Colonic mucosa (tissue), 4 donors: ENCODE measurements at regions of chr16 and their contacts with region 1.

Region 1: GRCh38 chr16:18983565-18984424 is at the start of gene TMC7:
- DNase-seq: peak; percentile 92
- H3K4me3 ChIP-seq: peak within 1 kb of the TSS; percentile 76
- H3K27ac ChIP-seq: peak within 1 kb of the TSS; percentile 72
- H3K4me1 ChIP-seq: no peaks in the 10 kb centered on the region
- H3K27me3 ChIP-seq: peaks cover 3% of the 10 kb centered on the region
- CTCF ChIP-seq: peak; percentile 55
- total RNA-seq, gene TMC7: 10.0 to 10.6 TPM

Region 2: DNA sequence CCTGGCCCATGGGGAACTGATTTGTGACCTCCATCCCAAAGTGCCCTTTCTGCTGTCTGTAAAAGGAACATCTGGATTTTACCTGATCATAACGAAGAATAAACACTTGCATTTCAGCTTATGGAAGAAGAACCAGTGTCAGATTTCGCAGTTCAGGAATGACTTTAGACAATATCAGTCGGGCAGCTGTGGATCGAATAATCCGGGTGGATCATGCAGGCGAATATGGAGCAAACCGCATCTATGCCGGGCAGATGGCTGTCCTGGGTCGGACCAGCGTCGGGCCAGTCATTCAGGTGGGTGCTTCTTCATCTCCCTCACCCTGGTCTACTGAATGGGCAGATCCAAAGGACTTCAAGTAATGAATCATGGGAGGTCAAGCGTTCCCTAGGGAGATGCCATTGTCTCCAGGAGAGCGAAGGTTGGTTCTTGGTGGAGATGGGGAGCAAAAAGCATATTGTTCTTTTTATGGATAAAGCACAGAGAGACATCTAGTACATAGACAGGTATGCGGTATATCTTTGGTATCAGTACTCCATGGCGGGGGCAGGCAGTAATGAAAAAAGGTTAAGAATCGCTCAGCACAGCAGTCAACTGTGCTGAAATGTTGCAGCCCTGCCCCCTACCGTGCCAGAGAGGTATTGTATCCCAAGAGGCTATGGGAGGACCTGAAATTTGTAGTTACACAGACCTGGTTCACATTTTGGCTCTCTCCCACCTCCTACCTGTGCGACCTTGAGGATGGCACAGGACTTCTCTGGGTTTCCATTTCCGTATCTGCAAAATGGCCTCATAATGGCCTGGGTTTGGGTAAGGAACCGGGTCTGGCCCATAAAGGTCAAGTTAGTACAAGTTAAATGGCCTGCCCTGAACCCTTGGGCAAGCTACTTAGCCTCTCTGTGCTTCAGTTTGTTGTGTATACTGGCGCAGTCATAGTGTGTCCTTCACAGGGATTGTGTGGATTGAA is 88.3 kb after region 1 on chr16:
- intact Hi-C with region 1: loop called (anchors 2 kb)
- DNase-seq: peak; percentile 78
- H3K4me3 ChIP-seq: no peak overlapping the region
- H3K27ac ChIP-seq: no peak overlapping the region
- H3K4me1 ChIP-seq: no peaks in the 10 kb centered on the region
- H3K27me3 ChIP-seq: no peaks in the 10 kb centered on the region
- CTCF ChIP-seq: peak; percentile 81

Region 3: GRCh38 chr16:19113453-19114351 is 129.9 kb after region 1 on chr16 and contains the start of gene ITPRIPL2:
- intact Hi-C with region 1: no loop called
- DNase-seq: peak; percentile 86
- H3K4me3 ChIP-seq: peak within 1 kb of the TSS; percentile 79
- H3K27ac ChIP-seq: peak within 1 kb of the TSS; percentile 94
- H3K4me1 ChIP-seq: peaks cover 21% of the 10 kb centered on the region
- H3K27me3 ChIP-seq: no peaks in the 10 kb centered on the region
- CTCF ChIP-seq: no peak
- total RNA-seq, gene ITPRIPL2: 34.9 to 36.2 TPM